Transverse colon (tissue), 4 donors: ENCODE measurements at regions of chr17 and their contacts with region 1.

Region 1: GRCh38 chr17:22193113-22193512 is 500.8 kb downstream of the KCNJ18 start:
- DNase-seq: no peak
- H3K4me3 ChIP-seq: no peak overlapping the region
- H3K27ac ChIP-seq: no peak overlapping the region
- H3K4me1 ChIP-seq: no peaks in the 10 kb centered on the region
- H3K27me3 ChIP-seq: no peaks in the 10 kb centered on the region
- CTCF ChIP-seq: no peak
- EP300 ChIP-seq: no peak
- POLR2A ChIP-seq: no peak

Region 2: GRCh38 chr17:21772321-21772720 is 420.8 kb before region 1 on chr17:
- in situ Hi-C with region 1: no loop called
- intact Hi-C with region 1: no loop called
- DNase-seq: no peak
- H3K4me3 ChIP-seq: no peak overlapping the region
- H3K27ac ChIP-seq: no peak overlapping the region
- H3K4me1 ChIP-seq: peaks cover 0 to 10% (median 2%) of the 10 kb centered on the region in 4 donors
- H3K27me3 ChIP-seq: no peaks in the 10 kb centered on the region
- CTCF ChIP-seq: no peak
- EP300 ChIP-seq: no peak
- POLR2A ChIP-seq: no peak

Region 3: GRCh38 chr17:22138861-22139469 is 54.1 kb before region 1 on chr17:
- in situ Hi-C with region 1: no loop called
- intact Hi-C with region 1: loop called (anchors 10 kb)
- DNase-seq: no peak
- H3K4me3 ChIP-seq: no peak overlapping the region
- H3K27ac ChIP-seq: no peak overlapping the region
- H3K4me1 ChIP-seq: no peaks in the 10 kb centered on the region
- H3K27me3 ChIP-seq: no peaks in the 10 kb centered on the region
- CTCF ChIP-seq: no peak
- EP300 ChIP-seq: no peak
- POLR2A ChIP-seq: no peak